Mammary epithelial cell (primary cell): ENCODE measurements at regions of chr6 and their contacts with region 1.

Region 1: GRCh38 chr6:145809211-145809610 is 5.4 kb downstream of the FBXO30 start:
- DNase-seq: no peak
- H3K4me3 ChIP-seq: no peak overlapping the region
- H3K27ac ChIP-seq: no peak overlapping the region
- H3K4me1 ChIP-seq: peaks cover 15% of the 10 kb centered on the region
- H3K27me3 ChIP-seq: no peaks in the 10 kb centered on the region
- CTCF ChIP-seq: no peak

Region 2: GRCh38 chr6:145749632-145750031 is 59.6 kb before region 1 on chr6:
- CTCF ChIA-PET with region 1: no interaction called
- dilution Hi-C with region 1: loop called (anchors 5 kb)
- in situ Hi-C with region 1: loop called in 1 of 2 experiments (anchors 10 kb)
- intact Hi-C with region 1: no loop called
- DNase-seq: peak; percentile 64
- H3K4me3 ChIP-seq: no peak overlapping the region
- H3K27ac ChIP-seq: no peak overlapping the region
- H3K4me1 ChIP-seq: peaks cover 4% of the 10 kb centered on the region
- H3K27me3 ChIP-seq: no peaks in the 10 kb centered on the region
- CTCF ChIP-seq: no peak